ENCODE measurements at regions of chr10 and their contacts with region 1.

Region 1: GRCh38 chr10:70255329-70256299 is 22.4 kb upstream of the PPA1 start:
- DNase-seq: no peak
- H3K4me3 ChIP-seq: 0 out of 2 replicates have a peak overlapping the region, but pooled peaks have one; percentile 3
- CTCF ChIP-seq: peak; percentile 10

Region 2: GRCh38 chr10:70267161-70267933 is 11.7 kb after region 1 on chr10:
- CTCF ChIA-PET with region 1: interaction called, 13 read pairs
- POLR2A ChIA-PET with region 1: no interaction called
- DNase-seq: peak; percentile 80
- H3K4me3 ChIP-seq: no peak overlapping the region
- CTCF ChIP-seq: peak; percentile 20